WTC11 (cell line): ENCODE measurements at regions of chr14 and their contacts with region 1.

Region 1: DNA sequence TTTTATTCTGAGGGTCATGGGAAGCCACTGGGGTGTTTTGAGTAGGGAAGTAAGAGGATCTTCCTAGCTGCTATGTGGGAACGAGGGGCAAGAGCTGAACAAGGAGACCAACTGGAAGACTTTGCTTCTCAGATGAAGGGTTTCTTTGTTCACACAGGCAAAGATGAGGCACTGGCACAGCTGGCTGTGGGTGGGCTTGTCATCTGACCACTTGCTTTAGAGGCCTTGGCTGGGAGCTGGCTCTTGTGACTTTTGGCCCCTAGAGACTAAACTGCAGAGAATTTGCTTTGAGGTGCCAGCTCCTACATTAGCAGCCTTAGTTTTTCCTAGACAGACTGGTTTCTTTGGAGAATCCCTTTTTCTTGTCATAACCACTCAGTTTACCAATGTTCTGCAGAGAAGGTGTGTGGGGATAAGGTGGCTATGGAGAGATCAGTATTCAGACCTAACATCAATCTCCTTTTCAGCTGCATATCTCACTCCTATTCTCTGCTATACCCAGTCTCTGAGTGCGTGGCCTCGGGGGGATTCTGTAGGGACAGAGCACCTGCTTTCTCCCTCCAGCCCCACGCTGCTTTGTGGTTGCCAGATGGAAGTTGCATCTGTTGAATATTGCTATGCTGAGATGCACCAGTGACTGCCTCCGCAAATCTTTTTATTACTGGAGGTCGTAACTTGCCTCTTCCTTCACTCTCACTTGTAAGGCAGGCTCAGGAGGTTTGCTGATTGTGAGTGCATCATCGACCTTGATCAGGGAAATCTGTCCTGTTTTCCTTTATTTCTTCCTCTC is 12.7 kb downstream of the PPP2R5C start:
- DNase-seq: no peak
- ATAC-seq: no peak
- H3K4me3 Mint-ChIP-seq: no peak overlapping the region
- H3K27ac Mint-ChIP-seq: no peak overlapping the region
- H3K4me1 Mint-ChIP-seq: no peaks in the 10 kb centered on the region
- H3K27me3 Mint-ChIP-seq: peaks cover 16% of the 10 kb centered on the region
- CTCF ChIP-seq: no peak

Region 2: GRCh38 chr14:101707068-101707842 is 66.9 kb before region 1 on chr14:
- CTCF ChIA-PET with region 1: interaction called, 31 read pairs
- POLR2A ChIA-PET with region 1: interaction called, 3 read pairs
- DNase-seq: peak; percentile 67
- ATAC-seq: peak; percentile 71
- H3K4me3 Mint-ChIP-seq: no peak overlapping the region
- H3K27ac Mint-ChIP-seq: no peak overlapping the region
- H3K4me1 Mint-ChIP-seq: peaks cover 29% of the 10 kb centered on the region
- H3K27me3 Mint-ChIP-seq: peaks cover 44% of the 10 kb centered on the region
- CTCF ChIP-seq: peak; percentile 94

Region 3: DNA sequence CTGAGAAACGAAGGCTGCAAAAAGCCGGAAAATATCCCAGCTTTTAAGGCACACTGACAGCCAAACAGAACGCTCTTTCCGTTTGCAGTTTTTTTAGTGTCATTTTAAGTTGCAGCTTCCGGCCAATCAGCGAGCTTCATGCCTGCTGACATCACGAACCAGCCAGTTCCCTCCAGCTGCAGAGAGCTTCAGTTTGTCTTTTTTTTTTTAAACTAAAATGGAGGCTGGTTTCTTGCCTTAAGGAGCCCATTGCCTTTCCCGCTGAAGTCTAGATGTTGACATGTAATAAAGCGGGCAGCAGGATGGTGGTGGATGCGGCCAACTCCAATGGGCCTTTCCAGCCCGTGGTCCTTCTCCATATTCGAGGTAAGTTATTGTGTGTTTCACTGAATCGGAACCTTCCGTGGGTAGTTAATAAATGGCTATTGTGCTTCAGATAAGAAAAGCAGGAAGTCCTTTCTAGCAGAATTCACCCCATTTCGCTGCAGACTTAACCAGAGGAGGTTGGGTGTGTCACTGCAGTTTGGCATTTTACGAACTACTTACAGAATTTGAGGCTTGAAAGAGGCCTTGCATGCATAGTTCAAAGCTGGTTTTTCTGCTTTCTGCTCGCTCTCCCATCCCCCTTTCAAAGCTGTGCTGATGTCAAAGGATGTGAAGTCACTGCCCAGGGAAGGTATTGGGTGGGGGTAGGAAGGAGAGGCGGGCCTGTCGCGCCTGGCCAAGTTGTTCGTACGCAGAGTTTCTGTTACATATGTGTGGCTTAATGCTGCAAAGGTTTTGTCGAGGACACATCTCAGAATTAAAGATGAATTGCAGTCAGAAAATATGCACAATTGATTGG is 35.7 kb after region 1 on chr14:
- CTCF ChIA-PET with region 1: interaction called, 38 read pairs
- POLR2A ChIA-PET with region 1: interaction called, 3 read pairs
- DNase-seq: peak; percentile 76
- ATAC-seq: peak; percentile 79
- H3K4me3 Mint-ChIP-seq: peak overlapping the region; percentile 87
- H3K27ac Mint-ChIP-seq: peak overlapping the region; percentile 100
- H3K4me1 Mint-ChIP-seq: peaks cover 33% of the 10 kb centered on the region
- H3K27me3 Mint-ChIP-seq: no peaks in the 10 kb centered on the region
- CTCF ChIP-seq: no peak

Region 4: GRCh38 chr14:101917413-101918017 is 143.3 kb after region 1 on chr14:
- CTCF ChIA-PET with region 1: interaction called, 13 read pairs
- POLR2A ChIA-PET with region 1: no interaction called
- DNase-seq: no peak
- ATAC-seq: peak; percentile 45
- H3K4me3 Mint-ChIP-seq: peak overlapping the region; percentile 51
- H3K27ac Mint-ChIP-seq: peak overlapping the region; percentile 82
- H3K4me1 Mint-ChIP-seq: peaks cover 45% of the 10 kb centered on the region
- H3K27me3 Mint-ChIP-seq: no peaks in the 10 kb centered on the region
- CTCF ChIP-seq: no peak

Region 5: DNA sequence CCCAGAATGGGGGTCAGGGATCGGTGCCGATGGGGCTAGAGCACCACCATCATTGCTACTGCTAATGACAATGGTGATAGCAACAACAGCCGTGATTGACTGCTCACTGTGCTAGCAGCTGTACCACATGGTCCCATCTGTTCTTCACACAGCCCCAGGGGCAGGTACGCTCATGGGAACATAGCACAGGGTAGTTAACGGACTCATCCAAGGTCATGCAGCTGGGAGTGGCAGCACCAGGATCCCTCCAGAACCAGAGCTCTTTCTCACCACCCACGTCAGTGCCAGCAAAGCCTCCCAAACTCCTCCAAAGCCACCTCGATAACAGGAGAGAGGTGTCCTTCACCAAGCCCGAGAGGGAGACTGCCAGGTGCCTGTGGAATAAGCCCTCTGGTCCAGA is 178.9 kb after region 1 on chr14:
- CTCF ChIA-PET with region 1: interaction called, 15 read pairs
- POLR2A ChIA-PET with region 1: no interaction called
- DNase-seq: no peak
- ATAC-seq: no peak
- H3K4me3 Mint-ChIP-seq: no peak overlapping the region
- H3K27ac Mint-ChIP-seq: no peak overlapping the region
- H3K4me1 Mint-ChIP-seq: peaks cover 7% of the 10 kb centered on the region
- H3K27me3 Mint-ChIP-seq: no peaks in the 10 kb centered on the region; the same call in 1 of the 2 replicates
- CTCF ChIP-seq: no peak